Mammary epithelial cell (primary cell): ENCODE measurements at regions of chr2 and their contacts with region 1.

Region 1: DNA sequence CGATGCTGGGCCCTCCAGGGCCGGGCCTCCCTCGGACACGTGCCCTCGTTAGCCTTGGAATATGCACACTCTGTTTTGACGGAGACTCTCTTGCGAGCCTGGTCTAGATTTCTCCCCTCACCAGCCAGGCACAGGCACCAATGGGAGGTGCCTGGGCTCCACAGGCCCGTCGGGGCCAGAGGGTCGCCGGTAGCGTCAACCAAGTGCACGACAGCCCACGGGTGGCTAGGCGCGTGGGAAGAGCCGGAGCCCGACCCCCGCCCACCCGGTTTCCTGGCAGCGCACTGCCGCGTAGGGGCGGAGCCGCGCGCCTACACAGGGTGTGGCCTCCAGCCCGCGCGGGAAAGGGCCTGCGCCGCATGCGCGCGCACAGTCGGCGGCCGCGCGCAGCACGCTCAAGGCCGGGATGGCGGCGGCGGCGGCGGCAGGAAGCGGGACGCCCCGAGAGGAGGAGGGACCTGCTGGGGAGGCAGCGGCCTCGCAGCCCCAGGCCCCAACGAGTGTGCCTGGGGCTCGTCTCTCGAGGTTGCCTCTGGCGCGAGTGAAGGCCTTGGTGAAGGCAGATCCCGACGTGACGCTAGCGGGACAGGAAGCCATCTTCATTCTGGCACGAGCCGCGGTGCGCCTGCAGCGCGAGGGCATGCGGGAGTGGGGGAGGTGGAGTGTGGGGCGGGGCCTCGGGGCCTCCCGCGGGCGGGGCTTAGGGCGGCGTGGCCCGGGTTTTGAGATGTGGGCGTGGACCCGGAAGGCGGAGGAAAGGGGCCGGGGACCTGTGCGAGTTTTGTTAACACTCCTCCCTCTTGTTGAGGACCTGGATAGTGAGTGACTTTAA is at the start of gene POLE4:
- DNase-seq: peak; percentile 79
- H3K4me3 ChIP-seq: peak within 1 kb of the TSS; percentile 67 to 74 (median 67)
- H3K27ac ChIP-seq: peak within 1 kb of the TSS; percentile 65
- H3K4me1 ChIP-seq: peaks cover 8% of the 10 kb centered on the region
- H3K27me3 ChIP-seq: no peaks in the 10 kb centered on the region
- CTCF ChIP-seq: no peak
- total RNA-seq, gene POLE4: 10.8 to 79.7 TPM

Region 2: GRCh38 chr2:74887445-74887951 is 71.0 kb before region 1 on chr2:
- CTCF ChIA-PET with region 1: no interaction called
- dilution Hi-C with region 1: no loop called
- in situ Hi-C with region 1: no loop called
- intact Hi-C with region 1: loop called (anchors 5 kb)
- DNase-seq: peak; percentile 93
- H3K4me3 ChIP-seq: peak overlapping the region in 1 of 3 experiments; percentile 3
- H3K27ac ChIP-seq: peak overlapping the region; percentile 69
- H3K4me1 ChIP-seq: peaks cover 39% of the 10 kb centered on the region
- H3K27me3 ChIP-seq: no peaks in the 10 kb centered on the region
- CTCF ChIP-seq: no peak

Region 3: DNA sequence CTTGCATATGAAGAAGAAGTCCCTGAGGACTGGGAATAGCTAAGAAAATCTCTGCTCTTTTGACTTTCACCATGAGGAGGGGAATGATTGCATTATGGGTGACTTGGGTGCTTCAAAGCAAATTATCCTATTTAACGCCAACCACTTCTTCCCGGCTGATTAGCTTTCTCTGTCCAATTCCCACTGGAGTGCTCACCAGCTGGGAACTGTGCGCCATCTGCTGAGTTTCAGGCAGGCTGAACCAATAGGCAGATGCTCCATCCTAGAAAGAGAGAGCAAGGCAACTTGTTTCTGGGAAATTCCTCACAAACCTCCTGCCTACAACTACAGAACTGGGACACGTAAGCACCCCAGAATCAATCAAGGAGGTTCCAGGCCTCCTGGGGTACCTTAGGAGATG is 49.3 kb after region 1 on chr2:
- CTCF ChIA-PET with region 1: no interaction called
- dilution Hi-C with region 1: no loop called
- in situ Hi-C with region 1: no loop called
- intact Hi-C with region 1: no loop called
- DNase-seq: no peak
- H3K4me3 ChIP-seq: no peak overlapping the region
- H3K27ac ChIP-seq: no peak overlapping the region
- H3K4me1 ChIP-seq: no peaks in the 10 kb centered on the region
- H3K27me3 ChIP-seq: no peaks in the 10 kb centered on the region
- CTCF ChIP-seq: no peak

Region 4: GRCh38 chr2:75241696-75242095 is 283.2 kb after region 1 on chr2:
- CTCF ChIA-PET with region 1: no interaction called
- dilution Hi-C with region 1: no loop called
- in situ Hi-C with region 1: no loop called
- intact Hi-C with region 1: loop called (anchors 1 kb)
- DNase-seq: peak; percentile 5
- H3K4me3 ChIP-seq: no peak overlapping the region
- H3K27ac ChIP-seq: no peak overlapping the region
- H3K4me1 ChIP-seq: no peaks in the 10 kb centered on the region
- H3K27me3 ChIP-seq: no peaks in the 10 kb centered on the region
- CTCF ChIP-seq: peak; percentile 26 to 35